Cardiac septum (tissue), 1 donor: ENCODE measurements at regions of chr15 and their contacts with region 1.

Region 1: GRCh38 chr15:61200626-61201025 is 28.5 kb downstream of the RORA start:
- DNase-seq: no peak

Region 2: DNA sequence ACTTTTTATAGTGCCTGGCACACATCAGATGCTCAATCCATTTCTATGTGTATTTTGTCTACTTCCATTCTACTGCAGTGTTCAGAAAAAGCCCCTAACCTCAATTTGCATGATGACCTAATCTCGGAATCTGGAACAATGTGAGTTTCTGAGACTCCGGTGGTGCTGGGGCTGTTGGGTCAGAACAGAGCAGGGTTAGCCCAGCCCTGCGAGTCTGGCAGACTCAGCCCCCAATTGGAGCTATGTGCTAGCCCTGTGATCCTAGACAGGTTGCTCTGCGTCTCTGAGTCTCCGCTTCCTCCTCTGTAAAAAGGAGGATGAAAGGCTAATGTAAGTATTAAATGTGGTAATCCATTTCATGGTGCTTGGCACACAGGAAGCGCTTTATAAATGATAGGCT is 626.7 kb before region 1 on chr15:
- intact Hi-C with region 1: loop called (anchors 5 kb)
- DNase-seq: no peak

Region 3: DNA sequence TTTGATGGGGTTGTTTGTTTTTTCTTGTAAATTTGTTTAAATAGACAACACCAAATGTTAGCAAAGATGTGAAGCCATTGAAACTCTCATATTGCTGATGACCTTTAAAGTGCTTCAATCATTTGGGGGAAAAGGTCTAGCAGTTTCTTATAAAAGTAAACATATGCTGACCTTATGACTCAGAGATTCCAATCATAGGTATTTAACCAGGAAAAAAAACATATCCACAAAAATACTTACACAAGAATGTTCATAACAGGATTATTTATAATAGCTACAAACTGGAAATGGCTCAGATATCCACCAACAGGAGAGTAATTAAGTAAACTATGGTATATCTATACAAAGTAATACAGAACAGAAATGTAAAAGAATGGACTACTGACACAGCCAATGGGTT is 55.6 kb after region 1 on chr15:
- intact Hi-C with region 1: no loop called
- DNase-seq: no peak

Region 4: DNA sequence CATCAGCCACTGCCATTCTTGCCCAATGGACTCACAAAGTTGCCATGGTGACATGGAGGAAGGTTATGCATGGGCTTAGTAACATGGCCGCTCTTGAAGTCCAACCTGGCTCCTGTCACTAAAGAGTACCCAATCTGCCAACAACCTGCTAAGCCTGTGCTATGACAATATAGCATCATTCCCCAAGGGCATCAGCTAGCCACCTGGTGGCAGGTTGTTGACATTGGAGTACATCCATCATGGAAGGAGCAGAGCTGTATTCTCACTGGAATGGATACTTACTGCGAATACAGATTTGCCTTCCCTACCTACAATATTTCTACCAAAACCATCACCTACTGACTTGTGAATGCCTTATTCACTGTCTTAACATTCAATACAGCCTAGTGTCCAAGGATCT is 167.3 kb after region 1 on chr15:
- intact Hi-C with region 1: no loop called
- DNase-seq: no peak